Cardiac septum (tissue), 1 donor: ENCODE measurements at regions of chr1 and their contacts with region 1.

Region 1: DNA sequence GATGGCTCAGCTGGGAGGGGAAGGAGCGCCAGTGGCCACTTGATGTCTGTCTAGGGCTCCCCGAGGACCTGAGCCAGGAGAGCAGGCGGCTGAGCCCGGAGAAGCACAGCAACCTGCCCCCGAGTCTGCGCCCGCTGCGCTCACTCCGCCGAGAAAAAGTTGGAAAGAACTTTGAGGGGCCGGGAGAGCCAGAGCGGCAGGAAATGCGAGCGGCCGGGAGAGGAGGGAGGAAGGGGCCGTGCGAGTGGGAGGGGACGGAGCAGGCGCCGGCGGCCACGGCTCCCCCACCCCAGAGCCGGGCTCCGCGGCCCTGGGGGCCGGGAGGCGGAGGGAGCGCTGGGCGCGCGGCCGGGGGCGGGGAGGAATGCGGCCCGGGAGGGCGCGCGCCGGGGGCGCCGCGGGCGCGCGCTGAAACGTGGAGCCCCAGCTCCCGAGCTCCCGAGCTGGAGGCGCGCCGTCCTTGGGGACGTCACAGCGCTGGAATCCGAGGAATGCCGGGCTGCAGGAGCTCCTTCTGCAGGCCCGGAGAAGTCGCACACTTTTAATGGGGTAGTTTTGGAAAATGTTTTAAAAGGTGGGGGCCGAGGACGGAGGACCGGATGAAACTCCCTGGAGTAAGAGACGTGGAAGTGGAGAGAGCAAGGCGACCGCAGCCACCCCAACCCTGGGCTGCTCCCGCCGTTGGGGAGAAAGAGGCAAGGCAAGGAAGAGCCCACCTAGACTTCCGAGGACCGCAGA is at the start of gene PTPN14:
- DNase-seq: peak; percentile 91
- total RNA-seq, gene PTPN14: 67.7 TPM

Region 2: GRCh38 chr1:213891989-213892902 is 659.4 kb before region 1 on chr1:
- intact Hi-C with region 1: no loop called
- DNase-seq: no peak

Region 3: DNA sequence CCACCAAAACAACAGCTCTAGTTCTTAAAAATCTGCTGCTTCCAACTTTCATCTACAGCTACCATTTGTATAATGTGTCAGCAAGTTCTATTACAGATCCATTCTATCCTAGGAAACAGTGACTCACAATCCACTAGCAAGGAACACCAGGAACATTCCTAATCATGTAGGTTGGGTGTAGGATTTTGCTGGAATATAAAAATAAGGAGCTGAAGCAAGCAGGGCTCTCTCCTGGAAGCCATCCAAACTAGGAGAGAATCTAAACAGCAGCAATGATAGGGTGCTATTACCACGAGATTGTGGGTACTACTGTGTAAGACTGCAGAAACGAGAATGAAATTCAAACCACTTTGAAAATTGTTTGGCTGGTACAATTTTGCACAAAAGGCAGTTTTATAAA is 135.2 kb before region 1 on chr1:
- intact Hi-C with region 1: loop called (anchors 2 kb)
- DNase-seq: no peak

Region 4: DNA sequence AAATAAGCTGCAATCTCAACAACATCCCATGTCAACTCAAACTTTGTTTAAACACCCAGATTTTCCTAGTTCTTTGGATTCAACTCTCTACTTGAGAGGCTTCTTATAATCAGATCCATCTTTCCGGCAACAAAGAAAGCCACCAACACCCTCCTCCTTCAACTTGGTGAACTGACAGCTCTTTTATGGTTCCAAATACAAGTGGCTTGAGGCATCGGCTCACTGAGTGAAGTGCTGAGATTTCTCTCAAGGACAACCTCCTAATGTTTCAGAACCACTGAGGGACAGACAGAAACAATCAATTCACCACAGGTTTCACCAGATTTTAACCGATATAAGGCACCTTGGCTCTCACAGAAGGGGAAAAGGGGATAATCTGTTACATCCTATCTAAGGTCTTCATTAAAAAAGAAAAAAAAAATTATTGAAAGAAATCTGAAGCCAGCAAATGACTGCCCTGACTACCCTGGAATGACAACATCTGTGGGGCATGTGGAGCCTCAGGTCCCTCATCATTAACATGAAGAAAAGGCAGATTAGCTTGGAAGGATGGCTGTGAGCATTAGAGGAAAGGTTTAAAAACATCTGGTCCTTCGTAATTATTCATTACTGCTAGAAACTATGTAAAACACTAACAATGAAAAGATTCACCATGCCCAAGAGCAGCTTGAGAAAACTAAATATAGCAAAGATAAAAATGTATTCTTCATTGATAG is 51.1 kb before region 1 on chr1:
- intact Hi-C with region 1: loop called (anchors 5 kb)
- DNase-seq: no peak